Activated CD4-positive, alpha-beta memory T cell treated with anti-CD3 and anti-CD28 coated beads, Interleukin-2, amount 10 ng/mL, durations not matched to agents 7 days and 5 days (primary cell): ENCODE measurements at regions of chr17 and their contacts with region 1.

Region 1: DNA sequence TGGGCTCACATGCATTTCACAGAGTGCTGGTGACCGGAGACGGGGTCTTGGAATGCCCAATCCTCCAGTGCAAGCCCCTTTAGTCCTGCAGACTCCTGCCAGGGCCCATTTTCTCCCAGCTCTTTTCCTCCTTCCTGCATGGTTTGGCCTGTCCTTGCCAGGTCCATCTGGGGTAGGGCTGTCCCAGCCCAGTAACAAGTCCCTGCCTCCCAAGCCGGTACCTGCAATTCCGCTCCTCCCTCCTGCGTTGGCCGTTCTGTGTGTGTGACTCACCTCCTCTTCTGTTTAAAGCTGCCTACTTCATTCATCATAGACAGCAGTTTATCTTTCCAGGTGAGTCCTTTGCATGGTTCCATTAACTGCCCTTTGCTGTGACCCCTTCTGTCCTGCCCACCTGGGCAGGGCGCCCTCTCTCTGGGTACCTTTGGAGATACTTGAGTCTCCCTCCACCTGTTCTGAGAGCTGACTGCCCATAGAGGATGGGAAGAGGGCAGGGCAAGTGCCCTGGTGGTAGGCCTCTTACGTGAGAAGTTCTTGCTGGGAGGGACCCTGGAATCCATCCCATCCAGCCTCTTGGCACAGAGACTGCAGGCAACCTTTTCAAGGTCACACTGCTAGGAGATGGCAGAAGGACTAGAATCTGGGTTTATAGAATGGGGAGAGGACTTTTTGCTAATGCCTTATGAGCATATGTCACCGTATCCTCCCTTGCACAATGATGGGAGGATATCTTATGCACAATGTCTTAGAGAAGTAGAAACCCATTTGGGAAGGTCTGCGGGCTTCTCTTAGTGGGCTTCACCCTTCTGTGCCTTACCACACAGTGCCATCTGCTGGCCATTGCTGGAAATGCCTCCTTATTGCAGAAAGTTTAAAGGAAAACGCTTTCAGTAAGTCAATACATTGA is 29.7 kb upstream of the LGALS9 start:
- DNase-seq: peak; percentile 82
- H3K4me3 Mint-ChIP-seq: no peak overlapping the region
- H3K27ac Mint-ChIP-seq: no peak overlapping the region
- H3K4me1 Mint-ChIP-seq: peaks cover 11% of the 10 kb centered on the region
- H3K27me3 Mint-ChIP-seq: no peaks in the 10 kb centered on the region

Region 2: GRCh38 chr17:27236717-27237315 is 364.5 kb before region 1 on chr17:
- CTCF ChIA-PET with region 1: interaction called, 100 read pairs
- POLR2A ChIA-PET with region 1: interaction called, 3 read pairs
- DNase-seq: peak; percentile 77
- H3K4me3 Mint-ChIP-seq: no peak overlapping the region
- H3K27ac Mint-ChIP-seq: no peak overlapping the region
- H3K4me1 Mint-ChIP-seq: peaks cover 33% of the 10 kb centered on the region
- H3K27me3 Mint-ChIP-seq: peaks cover 2% of the 10 kb centered on the region

Region 3: GRCh38 chr17:27381007-27381501 is 220.3 kb before region 1 on chr17:
- CTCF ChIA-PET with region 1: interaction called, 73 read pairs
- POLR2A ChIA-PET with region 1: interaction called, 3 read pairs
- DNase-seq: peak; percentile 82
- H3K4me3 Mint-ChIP-seq: no peak overlapping the region
- H3K27ac Mint-ChIP-seq: no peak overlapping the region
- H3K4me1 Mint-ChIP-seq: peaks cover 2% of the 10 kb centered on the region
- H3K27me3 Mint-ChIP-seq: peaks cover 15% of the 10 kb centered on the region

Region 4: GRCh38 chr17:27455914-27456680 is 145.2 kb before region 1 on chr17 and contains the start of gene KSR1:
- CTCF ChIA-PET with region 1: interaction called, 34 read pairs
- POLR2A ChIA-PET with region 1: interaction called, 19 read pairs
- DNase-seq: peak; percentile 86
- H3K4me3 Mint-ChIP-seq: peak within 1 kb of the TSS; percentile 94
- H3K27ac Mint-ChIP-seq: peak within 1 kb of the TSS; percentile 62
- H3K4me1 Mint-ChIP-seq: peaks cover 44% of the 10 kb centered on the region
- H3K27me3 Mint-ChIP-seq: peaks cover 6% of the 10 kb centered on the region
- total RNA-seq, gene KSR1: 44.4 to 47.6 TPM

Region 5: GRCh38 chr17:27563532-27563931 is 37.8 kb before region 1 on chr17:
- CTCF ChIA-PET with region 1: interaction called, 12 read pairs
- POLR2A ChIA-PET with region 1: no interaction called
- DNase-seq: no peak
- H3K4me3 Mint-ChIP-seq: no peak overlapping the region
- H3K27ac Mint-ChIP-seq: peak overlapping the region; percentile 54
- H3K4me1 Mint-ChIP-seq: peaks cover 44% of the 10 kb centered on the region
- H3K27me3 Mint-ChIP-seq: no peaks in the 10 kb centered on the region

Region 6: GRCh38 chr17:27578718-27579085 is 22.6 kb before region 1 on chr17:
- CTCF ChIA-PET with region 1: interaction called, 42 read pairs
- POLR2A ChIA-PET with region 1: no interaction called
- DNase-seq: peak; percentile 58
- H3K4me3 Mint-ChIP-seq: no peak overlapping the region
- H3K27ac Mint-ChIP-seq: peak overlapping the region; percentile 67
- H3K4me1 Mint-ChIP-seq: peaks cover 70% of the 10 kb centered on the region
- H3K27me3 Mint-ChIP-seq: no peaks in the 10 kb centered on the region

Region 7: DNA sequence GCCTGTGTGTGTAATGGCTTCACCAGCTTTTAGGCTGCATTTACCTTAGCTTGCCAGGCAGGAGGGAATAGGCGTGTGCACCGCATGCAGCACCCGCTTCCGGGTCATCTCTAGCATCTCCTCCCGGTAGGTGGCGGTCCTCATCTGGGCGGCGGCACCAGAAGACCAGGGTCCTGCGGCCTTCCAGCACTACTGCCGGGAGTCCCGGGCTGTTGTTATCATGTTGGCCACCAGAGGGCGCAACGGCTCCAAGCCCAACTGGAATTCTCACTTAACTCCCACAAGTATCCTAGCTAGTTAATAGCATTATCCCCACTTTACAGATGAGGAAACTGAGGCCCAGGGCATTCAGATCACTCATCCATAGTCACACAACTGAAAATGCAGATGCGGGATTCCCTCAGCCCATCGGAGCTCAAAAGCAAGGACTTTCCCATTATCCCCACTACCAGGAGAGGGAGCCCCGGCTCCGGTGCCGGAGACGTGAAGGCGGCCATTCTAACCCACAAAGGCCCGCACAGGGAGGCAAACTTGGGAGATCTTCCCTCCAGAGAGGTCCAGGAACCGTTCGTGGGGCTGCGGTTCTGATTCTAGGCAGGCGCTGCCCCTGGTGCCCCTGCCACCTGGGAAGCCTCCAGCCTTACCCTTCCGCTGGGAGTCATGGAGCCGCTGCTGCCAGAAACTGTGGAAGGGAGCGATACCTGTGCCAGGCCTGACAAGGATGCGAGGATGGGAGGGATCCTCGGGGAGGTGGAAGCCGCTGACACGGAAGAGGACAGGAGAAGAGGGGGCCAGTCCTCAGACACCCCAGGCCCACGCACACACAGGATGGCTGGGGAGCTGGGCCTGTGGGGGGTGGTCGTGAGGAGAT is 53.6 kb after region 1 on chr17:
- CTCF ChIA-PET with region 1: interaction called, 59 read pairs
- POLR2A ChIA-PET with region 1: interaction called, 5 read pairs
- DNase-seq: peak; percentile 66
- H3K4me3 Mint-ChIP-seq: no peak overlapping the region
- H3K27ac Mint-ChIP-seq: no peak overlapping the region
- H3K4me1 Mint-ChIP-seq: peaks cover 5% of the 10 kb centered on the region
- H3K27me3 Mint-ChIP-seq: peaks cover 2% of the 10 kb centered on the region

Region 8: DNA sequence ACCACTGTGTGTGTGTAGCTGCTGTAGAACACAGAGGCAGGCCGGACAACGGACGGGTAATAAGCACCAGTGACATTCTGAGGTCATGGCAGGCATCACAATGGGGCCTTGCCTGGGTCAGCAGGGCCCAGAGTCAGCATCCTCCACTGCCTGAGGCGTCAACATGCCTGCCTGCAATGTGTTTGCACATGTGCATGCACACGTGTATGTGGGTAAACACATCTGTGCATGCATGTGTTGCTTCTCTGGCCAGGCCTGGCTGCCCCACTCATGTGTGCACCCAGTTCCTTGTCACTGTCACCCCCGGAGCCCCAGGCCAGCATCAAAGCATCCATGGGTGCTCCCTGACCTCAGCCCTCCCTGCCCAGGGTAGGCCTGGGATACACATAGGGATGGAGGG is 73.0 kb after region 1 on chr17:
- CTCF ChIA-PET with region 1: no interaction called
- POLR2A ChIA-PET with region 1: no interaction called
- DNase-seq: no peak
- H3K4me3 Mint-ChIP-seq: no peak overlapping the region
- H3K27ac Mint-ChIP-seq: no peak overlapping the region
- H3K4me1 Mint-ChIP-seq: no peaks in the 10 kb centered on the region
- H3K27me3 Mint-ChIP-seq: peaks cover 3% of the 10 kb centered on the region

Region 9: GRCh38 chr17:27733773-27734172 is 132.5 kb after region 1 on chr17:
- CTCF ChIA-PET with region 1: no interaction called
- POLR2A ChIA-PET with region 1: no interaction called
- DNase-seq: no peak
- H3K4me3 Mint-ChIP-seq: no peak overlapping the region
- H3K27ac Mint-ChIP-seq: no peak overlapping the region
- H3K4me1 Mint-ChIP-seq: no peaks in the 10 kb centered on the region
- H3K27me3 Mint-ChIP-seq: peaks cover 38% of the 10 kb centered on the region

Region 10: GRCh38 chr17:27824745-27825144 is 223.4 kb after region 1 on chr17:
- CTCF ChIA-PET with region 1: no interaction called
- POLR2A ChIA-PET with region 1: no interaction called
- DNase-seq: no peak
- H3K4me3 Mint-ChIP-seq: no peak overlapping the region
- H3K27ac Mint-ChIP-seq: no peak overlapping the region
- H3K4me1 Mint-ChIP-seq: no peaks in the 10 kb centered on the region
- H3K27me3 Mint-ChIP-seq: peaks cover 17% of the 10 kb centered on the region